ENCODE measurements at regions of chr16 and their contacts with region 1.

Region 1: DNA sequence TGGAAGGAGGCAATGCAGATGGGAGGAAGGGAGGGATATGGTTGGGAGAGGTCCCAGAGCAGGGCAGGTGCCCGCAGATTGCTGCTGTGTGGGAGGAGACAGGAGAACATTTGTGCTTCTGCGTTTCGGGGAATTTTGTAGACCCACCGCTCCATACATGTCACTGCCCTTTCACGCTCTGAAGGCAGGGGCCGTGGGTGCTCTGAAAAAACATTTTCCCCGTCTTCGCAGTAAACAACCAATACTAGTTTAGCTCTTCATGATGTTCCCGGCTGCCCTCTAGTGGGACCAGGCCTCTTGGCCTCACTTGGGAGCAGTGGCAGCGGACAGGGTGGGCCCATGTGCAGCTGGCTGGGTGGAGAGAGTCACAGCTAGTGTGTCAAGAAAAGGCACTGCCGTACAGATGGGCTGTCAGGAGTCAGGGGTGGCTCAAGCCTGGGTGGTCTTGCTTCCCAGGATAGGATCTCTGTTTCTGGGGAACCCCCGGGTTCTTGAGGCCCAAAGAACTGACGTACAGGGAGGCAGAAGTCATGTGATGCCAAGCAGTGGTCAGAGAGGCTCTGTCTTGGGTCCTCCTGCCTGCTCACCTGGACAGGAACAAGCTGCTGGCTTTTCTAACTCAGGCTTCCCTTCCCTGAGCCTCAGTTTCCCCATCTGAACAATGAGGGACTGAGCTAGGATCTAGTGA is 46.5 kb upstream of the CPNE2 start:
- DNase-seq: peak; percentile 62
- ATAC-seq: no peak
- H3K4me3 Mint-ChIP-seq: no peak overlapping the region
- H3K27ac Mint-ChIP-seq: peak overlapping the region; percentile 73
- H3K4me1 Mint-ChIP-seq: peaks cover 48% of the 10 kb centered on the region
- H3K27me3 Mint-ChIP-seq: no peaks in the 10 kb centered on the region

Region 2: GRCh38 chr16:55502801-55503366 is 1543.0 kb before region 1 on chr16:
- CTCF ChIA-PET with region 1: no interaction called
- POLR2A ChIA-PET with region 1: no interaction called
- intact Hi-C with region 1: no loop called
- DNase-seq: no peak
- ATAC-seq: no peak
- H3K4me3 Mint-ChIP-seq: no peak overlapping the region
- H3K27ac Mint-ChIP-seq: no peak overlapping the region
- H3K4me1 Mint-ChIP-seq: peaks cover 17% of the 10 kb centered on the region
- H3K27me3 Mint-ChIP-seq: peaks cover 5% of the 10 kb centered on the region

Region 3: DNA sequence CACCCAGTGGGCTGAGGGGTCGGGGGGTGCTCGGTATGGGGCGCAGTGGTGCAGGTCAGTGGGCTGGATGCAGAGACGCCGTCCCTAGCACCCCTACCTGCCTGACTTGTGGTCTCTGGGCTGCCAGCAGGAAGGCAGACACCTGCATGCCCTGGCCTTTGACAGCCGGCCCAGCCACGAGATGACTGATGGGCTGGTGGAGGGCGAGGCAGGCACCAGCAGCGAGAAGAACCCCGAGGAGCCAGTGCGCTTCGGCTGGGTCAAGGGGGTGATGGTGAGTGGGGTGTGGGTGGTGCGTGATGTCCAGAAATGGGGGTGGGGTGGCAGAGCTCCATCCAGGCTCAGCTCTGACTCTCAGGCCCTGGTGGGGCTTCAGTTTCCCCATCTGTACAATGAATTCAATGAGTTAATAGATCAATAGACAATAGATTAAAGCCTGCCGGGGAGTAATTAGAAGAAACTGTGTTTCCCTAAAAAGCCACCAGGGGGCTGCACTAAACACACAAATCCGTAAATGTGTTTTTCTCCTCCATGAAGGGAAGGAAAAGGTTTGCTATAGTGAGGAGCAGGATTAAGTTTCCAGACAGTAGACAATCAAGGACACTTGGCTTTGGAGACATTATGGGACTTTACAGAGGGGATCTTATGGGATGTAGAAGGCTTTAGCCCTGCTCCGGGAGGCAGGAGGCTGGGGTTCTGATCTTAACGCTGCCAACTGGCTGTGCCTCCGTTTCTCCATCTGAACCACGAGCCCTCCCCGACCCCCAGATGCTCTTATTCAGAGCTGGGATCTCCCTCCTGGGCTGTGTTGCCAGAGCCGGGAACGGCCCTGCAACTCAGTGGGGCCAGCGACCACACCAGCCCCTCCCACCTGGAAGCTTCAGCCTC is 178.7 kb before region 1 on chr16:
- CTCF ChIA-PET with region 1: no interaction called
- POLR2A ChIA-PET with region 1: no interaction called
- intact Hi-C with region 1: loop called in 1 of 2 experiments (anchors 10 kb)
- DNase-seq: peak; percentile 62
- ATAC-seq: peak; percentile 48
- H3K4me3 Mint-ChIP-seq: no peak overlapping the region
- H3K27ac Mint-ChIP-seq: no peak overlapping the region
- H3K4me1 Mint-ChIP-seq: peaks cover 3% of the 10 kb centered on the region
- H3K27me3 Mint-ChIP-seq: no peaks in the 10 kb centered on the region

Region 4: GRCh38 chr16:56944954-56945839 is 100.6 kb before region 1 on chr16:
- CTCF ChIA-PET with region 1: interaction called, 4 read pairs
- POLR2A ChIA-PET with region 1: interaction called, 11 read pairs
- intact Hi-C with region 1: loop called (anchors 1 kb)
- DNase-seq: peak; percentile 61
- ATAC-seq: peak; percentile 79
- H3K4me3 Mint-ChIP-seq: peak overlapping the region; percentile 51
- H3K27ac Mint-ChIP-seq: peak overlapping the region; percentile 91
- H3K4me1 Mint-ChIP-seq: peaks cover 63% of the 10 kb centered on the region
- H3K27me3 Mint-ChIP-seq: no peaks in the 10 kb centered on the region

Region 5: GRCh38 chr16:56988948-56989945 is 56.6 kb before region 1 on chr16 and contains the start of gene NLRC5:
- CTCF ChIA-PET with region 1: interaction called, 12 read pairs
- POLR2A ChIA-PET with region 1: interaction called, 9 read pairs
- intact Hi-C with region 1: loop called (anchors 1 kb)
- DNase-seq: peak; percentile 97
- ATAC-seq: peak; percentile 78
- H3K4me3 Mint-ChIP-seq: peak within 1 kb of the TSS; percentile 98
- H3K27ac Mint-ChIP-seq: peak within 1 kb of the TSS; percentile 99
- H3K4me1 Mint-ChIP-seq: peaks cover 69% of the 10 kb centered on the region
- H3K27me3 Mint-ChIP-seq: no peaks in the 10 kb centered on the region
- total RNA-seq, gene NLRC5: 143 to 175 TPM

Region 6: DNA sequence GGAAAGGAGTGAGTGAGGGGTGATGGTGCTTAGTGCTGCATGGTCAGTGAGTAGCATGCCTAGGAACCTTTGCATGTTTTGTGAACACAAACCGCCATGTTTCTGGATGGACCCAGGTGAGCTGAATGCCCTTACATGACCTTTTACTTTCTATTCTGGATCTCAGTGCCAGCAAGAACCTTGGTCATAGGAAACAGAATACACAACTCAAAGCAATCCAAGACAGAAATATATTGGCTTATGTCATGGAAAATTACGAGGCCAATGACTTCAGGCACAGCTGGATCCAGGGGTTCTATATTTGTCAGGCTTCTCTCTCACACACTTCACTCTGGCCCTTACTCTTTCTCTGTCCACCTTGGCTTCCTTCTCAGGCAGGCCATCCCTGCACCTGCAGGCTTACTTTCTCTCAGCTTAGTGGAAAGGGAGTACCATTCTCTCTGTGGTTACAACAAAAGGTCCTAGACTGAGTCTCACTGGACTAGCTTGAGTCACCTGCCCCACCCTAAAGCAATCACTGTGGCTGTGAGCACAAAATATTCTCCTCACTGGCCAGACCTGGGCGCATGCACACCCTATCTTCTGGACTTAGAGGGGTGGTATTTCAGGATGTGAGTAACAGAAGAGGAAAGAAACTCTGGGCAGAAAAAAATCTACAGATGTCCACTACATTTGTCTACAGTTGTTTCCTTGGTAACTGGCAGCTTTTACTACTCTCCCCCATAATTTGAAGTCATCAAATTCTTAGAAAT is 26.2 kb after region 1 on chr16:
- CTCF ChIA-PET with region 1: no interaction called
- POLR2A ChIA-PET with region 1: no interaction called
- intact Hi-C with region 1: loop called in 1 of 2 experiments (anchors 2 kb)
- DNase-seq: no peak
- ATAC-seq: peak; percentile 66
- H3K4me3 Mint-ChIP-seq: no peak overlapping the region
- H3K27ac Mint-ChIP-seq: peak overlapping the region; percentile 62
- H3K4me1 Mint-ChIP-seq: peaks cover 17% of the 10 kb centered on the region
- H3K27me3 Mint-ChIP-seq: no peaks in the 10 kb centered on the region